Vagina (tissue), 2 donors: ENCODE measurements at regions of chr5 and their contacts with region 1.

Region 1: GRCh38 chr5:129767906-129768380 is 20.0 kb downstream of the MINAR2 start:
- DNase-seq: no peak
- H3K4me3 ChIP-seq: no peak overlapping the region
- H3K27ac ChIP-seq: no peak overlapping the region
- H3K4me1 ChIP-seq: no peaks in the 10 kb centered on the region
- H3K27me3 ChIP-seq: no peaks in the 10 kb centered on the region
- CTCF ChIP-seq: peak; percentile 93 to 96 (median 96)
- POLR2A ChIP-seq: no peak

Region 2: DNA sequence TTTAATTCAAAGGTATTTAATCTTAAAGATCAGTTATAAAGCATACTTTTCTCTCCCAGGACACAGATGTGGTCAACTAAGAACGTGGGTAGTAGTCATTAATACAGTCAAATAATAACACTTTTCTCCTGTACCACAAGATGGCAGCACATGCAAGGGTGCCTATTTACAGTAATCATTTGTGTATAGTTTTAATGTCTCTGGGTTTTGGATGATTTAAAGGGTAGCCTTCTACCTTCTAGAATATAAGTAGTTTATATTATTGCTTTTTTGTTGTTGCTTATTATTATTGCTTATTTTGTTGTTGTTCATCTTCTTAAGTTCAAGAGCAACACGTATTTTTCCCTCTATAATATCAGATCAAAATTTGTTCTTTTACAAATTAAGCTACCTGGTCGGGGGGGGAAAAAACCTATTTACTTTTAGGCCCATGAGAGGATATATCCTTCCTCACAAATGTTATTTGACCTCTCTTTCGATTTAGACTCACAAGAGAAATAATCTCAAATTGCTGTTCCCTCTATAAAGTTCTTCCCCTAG is 862.3 kb before region 1 on chr5:
- intact Hi-C with region 1: loop called (anchors 5 kb)
- DNase-seq: no peak
- H3K4me3 ChIP-seq: no peak overlapping the region
- H3K27ac ChIP-seq: no peak overlapping the region
- H3K4me1 ChIP-seq: no peaks in the 10 kb centered on the region
- H3K27me3 ChIP-seq: no peaks in the 10 kb centered on the region
- CTCF ChIP-seq: peak; percentile 48 to 69 (median 56)
- POLR2A ChIP-seq: no peak

Region 3: DNA sequence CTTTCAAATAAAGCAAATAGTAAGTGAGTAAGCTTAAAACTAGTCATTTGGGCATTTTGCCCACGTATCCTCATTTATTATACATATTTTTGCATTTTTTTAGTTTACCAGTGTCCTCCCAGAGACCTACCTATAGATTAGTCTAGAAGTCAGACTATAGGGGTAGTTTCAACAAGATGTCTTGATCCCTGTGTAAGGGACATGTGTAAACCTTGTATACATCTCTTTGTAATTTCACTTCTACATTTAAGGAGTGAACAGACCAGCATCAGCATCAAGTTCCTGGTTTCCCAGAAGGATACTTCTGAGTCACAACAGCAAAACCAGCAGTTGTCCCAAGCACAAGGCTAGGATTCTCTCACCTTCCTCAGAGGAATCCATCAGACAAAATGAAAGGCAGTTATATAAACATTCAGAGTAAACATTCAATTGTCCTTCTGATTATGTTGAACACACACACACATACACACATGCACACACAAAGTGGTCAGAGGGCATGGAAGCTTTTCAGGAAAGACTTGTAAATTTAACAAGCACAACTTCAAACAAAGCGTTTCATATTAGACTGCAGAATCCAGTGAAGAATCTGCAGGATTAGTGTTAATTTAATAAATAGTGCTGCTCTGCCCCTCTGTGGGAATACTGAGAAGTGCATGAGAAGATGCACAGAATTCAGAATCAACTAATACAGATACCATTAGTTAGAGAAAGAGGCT is 1341.8 kb after region 1 on chr5:
- intact Hi-C with region 1: no loop called
- DNase-seq: no peak
- H3K4me3 ChIP-seq: no peak overlapping the region
- H3K27ac ChIP-seq: no peak overlapping the region
- H3K4me1 ChIP-seq: no peaks in the 10 kb centered on the region
- H3K27me3 ChIP-seq: no peaks in the 10 kb centered on the region
- CTCF ChIP-seq: peak; percentile 8 to 72 (median 71)
- POLR2A ChIP-seq: no peak